BJ (cell line): ENCODE measurements at regions of chr2 and their contacts with region 1.

Region 1: DNA sequence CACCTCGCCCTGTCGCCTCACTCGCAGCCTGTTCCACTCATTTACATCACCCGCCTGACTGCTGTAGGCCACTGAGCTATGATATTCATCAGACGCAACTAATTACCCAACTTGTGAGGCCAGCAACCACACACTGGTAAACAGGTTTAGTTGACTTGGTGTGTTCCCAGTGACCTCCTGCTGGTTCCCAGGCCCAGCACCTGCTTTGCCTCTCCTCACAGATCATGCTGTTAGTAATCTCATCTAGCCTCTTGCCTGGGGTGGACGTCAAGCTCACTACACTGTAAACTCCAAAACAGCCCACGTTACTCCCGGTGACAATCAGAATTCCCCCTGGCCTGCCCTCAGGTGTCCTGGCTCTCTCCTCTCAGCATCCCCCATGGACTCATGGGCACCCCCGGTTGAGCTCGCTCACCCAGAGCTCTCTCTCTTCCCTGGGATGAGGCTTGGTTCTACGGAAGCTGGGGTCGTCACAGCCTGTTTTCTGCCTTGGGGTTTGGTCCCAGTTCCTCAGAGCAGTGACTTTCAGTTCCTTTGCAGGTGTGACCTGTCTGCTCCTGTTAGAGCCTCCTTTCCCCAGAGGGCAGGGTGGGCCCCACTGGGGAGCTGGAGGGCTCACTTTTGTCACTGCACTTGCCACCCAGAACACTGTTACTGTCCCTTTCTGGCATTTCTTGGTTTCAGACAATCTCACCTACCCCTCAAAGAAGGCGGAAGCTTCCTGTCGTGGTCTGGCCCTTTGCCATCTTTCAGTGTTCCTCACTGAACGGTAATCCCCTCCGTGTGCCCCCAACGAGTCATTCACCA is 40.3 kb downstream of the INPP5D start:
- DNase-seq: no peak
- H3K4me3 ChIP-seq: no peak overlapping the region
- H3K27me3 ChIP-seq: no peaks in the 10 kb centered on the region
- CTCF ChIP-seq: no peak

Region 2: DNA sequence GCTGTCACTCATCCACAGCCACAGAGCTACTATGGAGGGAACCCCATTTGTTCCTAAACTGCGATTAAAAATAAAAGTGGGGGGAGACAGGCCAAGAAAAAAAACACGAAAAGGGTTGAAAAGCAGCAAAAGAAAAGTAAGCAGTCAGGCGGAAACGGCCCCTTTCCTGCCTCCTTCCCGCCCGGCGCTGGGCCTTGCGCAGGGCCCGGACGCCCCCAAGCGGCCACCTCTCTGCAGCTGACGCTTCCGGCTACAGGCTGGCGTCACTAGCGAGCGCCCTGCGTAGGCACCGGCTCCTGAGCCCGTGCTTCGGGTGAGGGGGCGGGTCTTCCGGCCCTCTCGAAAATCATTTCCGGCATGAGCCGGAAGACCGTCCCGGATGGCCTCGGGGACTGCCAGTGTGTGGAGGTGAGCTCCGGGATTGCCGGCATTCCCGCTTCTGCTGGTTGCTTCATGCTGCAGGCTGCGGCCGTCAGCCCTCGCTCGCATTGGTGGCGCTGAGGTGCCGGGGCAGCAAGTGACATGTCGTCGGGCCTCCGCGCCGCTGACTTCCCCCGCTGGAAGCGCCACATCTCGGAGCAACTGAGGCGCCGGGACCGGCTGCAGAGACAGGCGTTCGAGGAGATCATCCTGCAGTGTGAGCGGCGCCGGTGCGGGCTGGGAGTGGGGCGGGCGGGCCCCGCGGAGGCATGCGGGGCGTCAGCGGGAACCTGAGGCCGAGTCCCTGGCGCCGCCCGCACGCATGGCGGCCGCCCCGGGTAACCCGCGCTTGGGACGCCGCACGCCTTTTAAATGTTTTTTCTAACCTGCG is 151.1 kb after region 1 on chr2 and contains the start of gene ATG16L1:
- CTCF ChIA-PET with region 1: interaction called, 12 read pairs
- POLR2A ChIA-PET with region 1: no interaction called
- DNase-seq: peak; percentile 65
- H3K4me3 ChIP-seq: peak within 1 kb of the TSS; percentile 87
- H3K27me3 ChIP-seq: no peaks in the 10 kb centered on the region
- CTCF ChIP-seq: peak; percentile 99
- polyA plus RNA-seq, gene ATG16L1: 26.4 and 29.2 TPM in 2 replicates